ENCODE measurements at regions of chr11 and their contacts with region 1.

Region 1: GRCh38 chr11:130434521-130435223 is 6.3 kb upstream of the ADAMTS8 start:
- DNase-seq: peak; percentile 31 to 86 (median 66)
- ATAC-seq: peak; percentile 92
- H3K4me3 ChIP-seq: peak overlapping the region; percentile 67 to 77
- H3K4me3 Mint-ChIP-seq: no peak overlapping the region
- H3K27ac ChIP-seq: no peak overlapping the region
- H3K27ac Mint-ChIP-seq: no peak overlapping the region
- H3K4me1 ChIP-seq: peaks cover 10% of the 10 kb centered on the region
- H3K4me1 Mint-ChIP-seq: peaks cover 15% of the 10 kb centered on the region
- H3K27me3 ChIP-seq: peaks cover 5 to 6% of the 10 kb centered on the region in 2 experiments
- H3K27me3 Mint-ChIP-seq: peaks cover 19% of the 10 kb centered on the region
- CTCF ChIP-seq: peak; percentile 89

Region 2: GRCh38 chr11:129557421-129557820 is 877.3 kb before region 1 on chr11:
- CTCF ChIA-PET with region 1: no interaction called
- POLR2A ChIA-PET with region 1: no interaction called
- intact Hi-C with region 1: no loop called
- DNase-seq: no peak
- ATAC-seq: no peak
- H3K4me3 ChIP-seq: no peak overlapping the region
- H3K4me3 Mint-ChIP-seq: no peak overlapping the region
- H3K27ac ChIP-seq: no peak overlapping the region
- H3K27ac Mint-ChIP-seq: no peak overlapping the region
- H3K4me1 ChIP-seq: no peaks in the 10 kb centered on the region
- H3K4me1 Mint-ChIP-seq: no peaks in the 10 kb centered on the region
- H3K27me3 ChIP-seq: no peaks in the 10 kb centered on the region
- H3K27me3 Mint-ChIP-seq: peaks cover 5% of the 10 kb centered on the region
- CTCF ChIP-seq: no peak

Region 3: DNA sequence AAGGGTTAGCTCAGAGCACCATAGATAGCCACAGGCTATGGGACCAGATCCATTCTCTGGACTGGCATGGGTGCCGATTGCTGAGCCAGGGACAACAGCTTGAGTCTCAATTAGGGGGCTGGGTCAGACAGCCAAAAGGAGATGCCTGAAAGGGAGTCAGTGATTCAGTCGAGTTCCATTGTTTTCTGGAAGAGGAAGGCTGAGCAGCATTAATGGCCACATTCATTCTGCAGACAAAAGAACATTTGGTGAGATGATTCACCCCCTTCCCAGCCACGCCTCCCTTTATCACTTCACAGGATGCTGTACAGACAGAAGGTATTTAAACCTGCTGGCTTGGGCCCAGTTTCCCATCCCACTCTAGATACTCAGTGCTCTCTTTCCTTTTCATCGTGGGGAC is 145.7 kb after region 1 on chr11:
- CTCF ChIA-PET with region 1: no interaction called
- POLR2A ChIA-PET with region 1: no interaction called
- intact Hi-C with region 1: no loop called
- DNase-seq: no peak
- ATAC-seq: no peak
- H3K4me3 ChIP-seq: no peak overlapping the region
- H3K4me3 Mint-ChIP-seq: no peak overlapping the region
- H3K27ac ChIP-seq: no peak overlapping the region
- H3K27ac Mint-ChIP-seq: no peak overlapping the region
- H3K4me1 ChIP-seq: no peaks in the 10 kb centered on the region
- H3K4me1 Mint-ChIP-seq: no peaks in the 10 kb centered on the region
- H3K27me3 ChIP-seq: no peaks in the 10 kb centered on the region
- H3K27me3 Mint-ChIP-seq: peaks cover 11% of the 10 kb centered on the region
- CTCF ChIP-seq: no peak

Region 4: GRCh38 chr11:130894322-130895025 is 459.8 kb after region 1 on chr11:
- CTCF ChIA-PET with region 1: interaction called, 26 read pairs
- POLR2A ChIA-PET with region 1: no interaction called
- intact Hi-C with region 1: loop called (anchors 1 kb)
- DNase-seq: peak; percentile 36 to 76 (median 62)
- ATAC-seq: peak; percentile 87
- H3K4me3 ChIP-seq: no peak overlapping the region
- H3K4me3 Mint-ChIP-seq: no peak overlapping the region
- H3K27ac ChIP-seq: no peak overlapping the region
- H3K27ac Mint-ChIP-seq: no peak overlapping the region
- H3K4me1 ChIP-seq: no peaks in the 10 kb centered on the region
- H3K4me1 Mint-ChIP-seq: peaks cover 4% of the 10 kb centered on the region
- H3K27me3 ChIP-seq: no peaks in the 10 kb centered on the region
- H3K27me3 Mint-ChIP-seq: no peaks in the 10 kb centered on the region
- CTCF ChIP-seq: peak; percentile 94